ENCODE measurements at regions of chr17 and their contacts with region 1.

Region 1: GRCh38 chr17:10618202-10618635 is 38.9 kb downstream of the MYH3 start:
- DNase-seq: peak; percentile 83
- ATAC-seq: peak; percentile 94
- H3K4me3 ChIP-seq: no peak overlapping the region
- H3K27ac ChIP-seq: no peak overlapping the region
- H3K4me1 ChIP-seq: no peaks in the 10 kb centered on the region
- H3K27me3 ChIP-seq: no peaks in the 10 kb centered on the region
- CTCF ChIP-seq: peak; percentile 82

Region 2: GRCh38 chr17:9924735-9925191 is 693.5 kb before region 1 on chr17:
- CTCF ChIA-PET with region 1: no interaction called
- POLR2A ChIA-PET with region 1: no interaction called
- intact Hi-C with region 1: loop called (anchors 10 kb)
- DNase-seq: peak; percentile 83
- ATAC-seq: peak; percentile 75
- H3K4me3 ChIP-seq: no peak overlapping the region
- H3K27ac ChIP-seq: no peak overlapping the region
- H3K4me1 ChIP-seq: no peaks in the 10 kb centered on the region; the same call in 1 of the 2 replicates
- H3K27me3 ChIP-seq: peaks cover under 1% of the 10 kb centered on the region; the same call in 1 of the 2 replicates
- CTCF ChIP-seq: peak; percentile 74

Region 3: GRCh38 chr17:10295728-10296343 is 322.4 kb before region 1 on chr17:
- CTCF ChIA-PET with region 1: interaction called, 4 read pairs
- POLR2A ChIA-PET with region 1: no interaction called
- intact Hi-C with region 1: loop called (anchors 10 kb)
- DNase-seq: peak; percentile 61
- ATAC-seq: peak; percentile 38; the same call in 1 of the 2 replicates
- H3K4me3 ChIP-seq: no peak overlapping the region
- H3K27ac ChIP-seq: no peak overlapping the region
- H3K4me1 ChIP-seq: no peaks in the 10 kb centered on the region
- H3K27me3 ChIP-seq: no peaks in the 10 kb centered on the region
- CTCF ChIP-seq: peak; percentile 64

Region 4: DNA sequence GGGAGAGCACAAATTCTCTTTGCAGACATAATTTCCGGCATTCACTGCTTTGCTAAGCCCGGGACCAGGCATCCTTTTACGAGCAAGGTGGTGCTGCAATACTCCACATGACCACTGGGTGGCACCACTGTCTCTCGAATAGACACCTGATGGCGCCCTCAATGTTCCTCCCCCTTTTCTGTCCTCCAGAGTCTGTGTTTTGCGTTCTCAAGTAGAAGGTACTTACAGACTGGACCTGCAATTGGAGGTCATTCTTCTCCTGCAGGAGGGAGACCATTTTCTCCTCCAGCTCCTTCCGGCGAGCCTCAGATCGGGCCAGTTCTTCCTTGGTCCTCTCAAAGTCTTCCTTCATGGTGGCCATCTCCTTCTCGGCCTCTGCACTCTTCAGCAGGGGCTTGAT is 290.6 kb before region 1 on chr17:
- CTCF ChIA-PET with region 1: no interaction called
- POLR2A ChIA-PET with region 1: no interaction called
- intact Hi-C with region 1: loop called (anchors 1 kb)
- DNase-seq: peak; percentile 86
- ATAC-seq: peak; percentile 59
- H3K4me3 ChIP-seq: no peak overlapping the region
- H3K27ac ChIP-seq: no peak overlapping the region
- H3K4me1 ChIP-seq: no peaks in the 10 kb centered on the region
- H3K27me3 ChIP-seq: peaks cover 3% of the 10 kb centered on the region; the same call in 1 of the 2 replicates
- CTCF ChIP-seq: peak; percentile 81